Left lung (tissue), 14 donors: ENCODE measurements at regions of chr9 and their contacts with region 1.

Region 1: DNA sequence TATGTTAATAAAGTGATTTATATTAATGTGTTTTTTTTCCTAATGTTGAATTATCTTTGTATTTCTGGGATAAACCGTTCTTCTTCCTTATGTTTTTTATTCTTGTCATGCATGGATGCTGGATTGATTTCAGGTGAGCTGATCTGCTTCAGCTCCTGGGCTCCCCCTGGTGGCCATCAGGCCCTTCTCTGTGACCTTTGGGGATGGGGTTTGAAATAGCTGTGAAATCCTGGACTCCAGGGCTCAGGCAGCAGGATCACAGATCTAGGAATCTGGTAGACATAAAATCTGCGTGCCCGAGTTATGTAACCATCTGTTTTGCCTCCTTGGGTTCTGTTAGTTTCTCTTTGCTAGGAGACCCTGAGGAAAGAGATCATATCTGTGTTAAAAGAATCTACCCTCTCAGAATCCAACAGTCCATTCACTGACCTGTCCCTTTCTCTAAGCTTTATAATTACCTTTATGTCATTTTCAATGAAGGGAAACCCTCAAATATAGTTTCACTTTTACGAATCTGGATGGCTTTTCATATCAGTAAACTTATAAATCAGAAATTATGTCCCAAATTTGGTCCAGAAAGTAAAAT is 12.2 kb upstream of the OR13J1 start:
- DNase-seq: peak; percentile 73 to 93 (median 83)
- ATAC-seq: peak; percentile 95
- H3K4me3 ChIP-seq: no peak overlapping the region
- H3K27ac ChIP-seq: no peak overlapping the region
- H3K4me1 ChIP-seq: no peaks in the 10 kb centered on the region
- H3K27me3 ChIP-seq: peaks cover 0 to 5% of the 10 kb centered on the region in 2 donors
- CTCF ChIP-seq: peak; percentile 94 to 95

Region 2: GRCh38 chr9:35603987-35604577 is 278.3 kb before region 1 on chr9:
- intact Hi-C with region 1: no loop called
- DNase-seq: peak; percentile 99 to 100 (median 100)
- ATAC-seq: peak; percentile 93
- H3K4me3 ChIP-seq: peak overlapping the region; percentile 55 to 70
- H3K27ac ChIP-seq: peak overlapping the region; percentile 92 to 94
- H3K4me1 ChIP-seq: peaks cover 21 to 38% of the 10 kb centered on the region in 2 donors
- H3K27me3 ChIP-seq: no peaks in the 10 kb centered on the region
- CTCF ChIP-seq: peak; percentile 89 to 97

Region 3: GRCh38 chr9:35829084-35829763 is 53.1 kb before region 1 on chr9 and contains the start of gene TMEM8B:
- intact Hi-C with region 1: loop called in 1 of 2 experiments (anchors 5 kb)
- DNase-seq: peak; percentile 94 to 97 (median 96)
- ATAC-seq: peak; percentile 90
- H3K4me3 ChIP-seq: peak within 1 kb of the TSS; percentile 57 to 69
- H3K27ac ChIP-seq: peak within 1 kb of the TSS; percentile 82 to 90
- H3K4me1 ChIP-seq: peaks cover 6 to 31% of the 10 kb centered on the region in 2 donors
- H3K27me3 ChIP-seq: no peaks in the 10 kb centered on the region
- CTCF ChIP-seq: no peak
- polyA plus RNA-seq, gene TMEM8B: 25.3 to 30.7 (median 27.2) TPM